ENCODE measurements at regions of chr6 and their contacts with region 1.

Region 1: DNA sequence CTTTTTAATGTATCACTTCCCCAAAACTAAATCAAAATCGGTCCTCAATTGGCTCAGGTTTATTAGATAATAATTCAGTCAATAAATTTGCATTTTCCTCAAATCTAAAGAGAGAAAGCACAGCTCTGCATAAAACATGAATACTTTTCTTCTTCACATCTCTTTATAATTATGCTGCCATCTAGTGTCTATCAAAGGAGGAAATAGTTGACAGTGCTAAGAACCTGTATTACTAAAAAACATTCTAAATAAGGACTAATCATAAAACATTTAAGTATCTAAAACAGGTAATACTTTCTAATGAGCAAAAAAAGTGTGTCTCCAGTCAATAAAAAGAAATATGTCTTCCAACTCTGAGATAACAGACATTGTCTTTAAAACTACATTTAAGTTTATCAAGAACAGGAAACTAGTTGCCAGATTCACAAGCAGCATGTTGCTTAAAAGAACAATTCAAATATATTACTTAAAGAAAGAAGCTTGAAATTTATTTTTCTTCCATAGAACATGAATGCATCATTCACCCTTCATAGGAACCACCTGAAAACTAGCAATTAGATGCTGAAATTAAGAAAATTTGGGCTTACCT is 56.5 kb upstream of the DST start:
- DNase-seq: no peak
- H3K4me3 ChIP-seq: no peak overlapping the region
- H3K27ac ChIP-seq: peak overlapping the region in 1 of 2 experiments; percentile 21; a peak in 1 of 4 replicates
- H3K4me1 ChIP-seq: peaks cover 0 to 19% of the 10 kb centered on the region in 2 experiments; a peak in 3 of 4 replicates
- H3K27me3 ChIP-seq: no peaks in the 10 kb centered on the region
- CTCF ChIP-seq: peak; percentile 68
- EP300 ChIP-seq: no peak
- RAD21 ChIP-seq: peak; percentile 71

Region 2: DNA sequence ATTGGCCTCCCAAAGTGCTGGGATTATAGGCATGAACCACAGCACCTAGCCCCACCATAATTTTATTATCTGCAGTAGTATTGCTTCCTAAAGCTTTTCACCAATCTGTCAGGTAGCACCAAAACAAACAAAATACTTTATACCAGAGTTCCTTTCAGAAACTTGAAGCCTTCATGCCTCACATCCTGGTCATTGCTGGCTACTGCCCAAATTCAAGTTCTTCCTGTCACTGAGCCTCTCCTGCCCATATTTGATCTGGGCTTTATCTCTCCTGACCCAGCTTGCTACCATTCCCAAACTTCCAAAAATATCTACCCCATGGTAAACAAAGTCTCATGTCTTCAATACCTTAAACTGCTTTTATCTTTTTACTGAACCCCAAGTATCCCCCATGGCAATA is 21.6 kb before region 1 on chr6:
- CTCF ChIA-PET with region 1: interaction called, 14 read pairs
- POLR2A ChIA-PET with region 1: no interaction called
- DNase-seq: no peak
- H3K4me3 ChIP-seq: no peak overlapping the region
- H3K27ac ChIP-seq: 0 out of 4 replicates have a peak overlapping the region, but pooled peaks of 1 of the 2 experiments have one; percentile 26
- H3K4me1 ChIP-seq: peaks cover 0 to 10% of the 10 kb centered on the region in 2 experiments; a peak in 2 of 4 replicates
- H3K27me3 ChIP-seq: no peaks in the 10 kb centered on the region
- CTCF ChIP-seq: no peak
- EP300 ChIP-seq: no peak
- RAD21 ChIP-seq: no peak

Region 3: GRCh38 chr6:56683882-56684281 is 15.3 kb before region 1 on chr6:
- CTCF ChIA-PET with region 1: interaction called, 16 read pairs
- POLR2A ChIA-PET with region 1: no interaction called
- DNase-seq: no peak
- H3K4me3 ChIP-seq: no peak overlapping the region
- H3K27ac ChIP-seq: peak overlapping the region in 1 of 2 experiments; percentile 77; a peak in 2 of 4 replicates
- H3K4me1 ChIP-seq: peaks cover 19 to 23% of the 10 kb centered on the region in 2 experiments
- H3K27me3 ChIP-seq: no peaks in the 10 kb centered on the region
- CTCF ChIP-seq: no peak
- EP300 ChIP-seq: no peak
- RAD21 ChIP-seq: no peak

Region 4: DNA sequence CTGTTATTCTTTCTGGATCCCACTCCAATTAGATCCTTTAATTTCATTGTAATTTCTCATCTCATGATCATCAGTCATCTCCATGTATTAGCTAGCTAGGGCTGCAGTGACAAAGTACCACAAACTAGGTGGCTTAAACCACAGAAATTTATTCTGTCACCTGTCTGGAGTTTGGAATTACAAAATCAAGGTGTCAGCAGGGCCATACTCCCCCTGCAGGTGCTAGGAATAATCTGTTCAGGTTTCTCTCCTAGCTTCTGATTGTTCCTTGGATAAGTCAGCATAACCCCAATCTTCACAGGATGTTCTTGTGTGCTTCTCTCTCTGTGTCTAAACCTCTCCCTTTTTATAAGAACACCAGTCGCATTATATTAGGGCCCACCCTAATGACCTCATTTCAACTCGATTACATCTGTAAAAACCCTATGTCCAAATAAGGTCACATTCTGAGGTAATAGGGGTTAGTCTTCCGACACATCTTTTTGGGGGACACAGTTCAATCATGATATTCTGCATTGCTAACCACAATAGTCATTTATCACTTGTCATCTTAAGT is 296.3 kb after region 1 on chr6:
- CTCF ChIA-PET with region 1: no interaction called
- POLR2A ChIA-PET with region 1: no interaction called
- DNase-seq: no peak
- H3K4me3 ChIP-seq: no peak overlapping the region
- H3K27ac ChIP-seq: no peak overlapping the region
- H3K4me1 ChIP-seq: no peaks in the 10 kb centered on the region
- H3K27me3 ChIP-seq: no peaks in the 10 kb centered on the region
- CTCF ChIP-seq: peak; percentile 9; the same call in 1 of the 2 replicates
- EP300 ChIP-seq: no peak
- RAD21 ChIP-seq: no peak

Measured in SK-N-SH (cell line).